ENCODE measurements at regions of chr17 and their contacts with region 1.

Region 1: DNA sequence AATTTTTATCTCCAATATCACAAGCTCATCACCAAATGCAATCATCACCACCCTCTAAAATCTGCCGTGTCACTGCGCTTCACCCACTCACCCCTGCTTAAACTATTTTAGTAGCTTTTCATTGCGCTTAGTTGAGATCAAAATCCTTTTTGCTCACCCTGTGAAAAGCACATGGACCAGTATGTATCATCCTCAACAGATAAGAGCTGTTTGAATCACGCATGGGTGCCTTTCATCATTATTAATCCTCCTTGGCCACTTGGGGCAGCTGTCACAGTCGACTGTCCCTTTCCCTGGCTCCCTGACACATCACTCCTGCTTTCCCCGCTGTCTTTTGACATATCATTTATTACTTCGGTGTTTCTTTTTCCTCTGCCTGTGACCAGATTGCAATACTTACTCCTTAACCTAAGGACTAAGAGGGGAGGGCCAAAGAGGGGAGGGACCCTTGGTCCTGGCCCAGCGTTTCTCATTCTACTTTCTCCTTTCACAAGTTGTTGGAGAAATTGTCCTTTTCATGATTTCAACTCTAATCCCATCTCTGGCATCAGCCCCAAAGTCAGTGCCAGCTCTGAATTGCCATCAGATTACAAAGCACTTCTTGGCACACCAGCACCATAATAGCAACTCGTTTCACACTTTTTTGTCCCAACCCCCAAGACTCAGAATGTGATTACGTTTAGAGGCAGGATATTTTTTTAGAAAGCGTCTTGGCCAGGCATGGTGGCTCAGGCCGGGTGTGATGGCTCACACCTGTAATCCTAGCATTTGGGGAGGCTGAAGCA is 8.6 kb upstream of the KDM6B start:
- DNase-seq: no peak
- ATAC-seq: peak; percentile 53 to 57

Region 2: DNA sequence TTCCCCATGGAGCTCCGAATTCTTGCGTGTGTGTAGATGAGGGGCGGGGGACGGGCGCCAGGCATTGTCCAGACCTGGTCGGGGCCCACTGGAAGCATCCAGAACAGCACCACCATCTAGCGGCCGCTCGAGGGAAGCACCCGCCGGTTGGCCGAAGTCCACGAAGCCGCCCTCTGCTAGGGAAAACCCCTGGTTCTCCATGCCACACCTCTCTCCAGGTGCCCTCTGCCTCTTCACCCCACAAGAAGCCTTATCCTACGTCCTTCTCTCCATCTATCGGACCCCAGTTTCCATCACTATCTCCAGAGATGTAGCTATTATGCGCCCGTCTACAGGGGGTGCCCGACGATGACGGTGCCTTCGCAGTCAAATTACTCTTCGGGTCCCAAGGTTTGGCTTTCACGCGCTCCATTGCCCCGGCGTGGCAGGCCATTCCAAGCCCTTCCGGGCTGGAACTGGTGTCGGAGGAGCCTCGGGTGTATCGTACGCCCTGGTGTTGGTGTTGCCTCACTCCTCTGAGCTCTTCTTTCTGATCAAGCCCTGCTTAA is 264.3 kb before region 1 on chr17:
- intact Hi-C with region 1: no loop called
- DNase-seq: peak; percentile 93
- ATAC-seq: peak; percentile 76 to 83

Region 3: DNA sequence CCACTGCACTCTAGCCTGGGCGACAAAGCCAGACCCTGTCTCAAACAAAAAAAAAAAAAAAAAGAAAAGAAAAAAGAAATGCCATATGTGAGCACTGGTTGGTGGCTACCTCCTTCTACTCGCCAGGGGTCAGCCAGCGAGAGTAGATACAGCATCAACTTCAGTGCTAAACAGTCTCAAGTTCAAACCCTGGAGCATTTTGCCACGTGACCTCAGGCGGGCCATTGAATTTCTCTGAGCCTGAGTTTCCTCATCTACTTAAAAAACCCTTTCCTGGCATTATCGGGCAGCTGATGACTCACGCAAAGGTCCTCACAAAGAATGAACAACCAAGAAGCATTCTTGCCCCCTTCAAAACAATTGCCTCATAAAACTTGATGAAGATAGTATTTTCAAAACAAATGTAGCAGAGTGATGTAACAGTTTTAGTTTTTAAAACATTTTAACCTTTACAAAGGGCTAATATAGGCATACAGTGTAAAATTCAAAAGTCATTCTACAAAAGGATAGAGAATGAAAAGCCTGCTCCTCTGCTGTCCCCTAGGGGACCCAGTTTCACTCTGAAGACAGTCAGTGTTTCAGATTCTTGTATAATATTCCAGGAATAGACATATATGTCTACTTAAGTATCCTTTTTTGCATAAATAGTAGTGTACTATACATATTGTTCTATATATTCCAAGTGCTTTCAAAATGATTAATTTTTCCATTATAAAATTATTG is 79.5 kb before region 1 on chr17:
- intact Hi-C with region 1: loop called in 1 of 2 experiments (anchors 5 kb)
- DNase-seq: peak; percentile 41
- ATAC-seq: peak in 1 of 2 donors; percentile 13

Region 4: DNA sequence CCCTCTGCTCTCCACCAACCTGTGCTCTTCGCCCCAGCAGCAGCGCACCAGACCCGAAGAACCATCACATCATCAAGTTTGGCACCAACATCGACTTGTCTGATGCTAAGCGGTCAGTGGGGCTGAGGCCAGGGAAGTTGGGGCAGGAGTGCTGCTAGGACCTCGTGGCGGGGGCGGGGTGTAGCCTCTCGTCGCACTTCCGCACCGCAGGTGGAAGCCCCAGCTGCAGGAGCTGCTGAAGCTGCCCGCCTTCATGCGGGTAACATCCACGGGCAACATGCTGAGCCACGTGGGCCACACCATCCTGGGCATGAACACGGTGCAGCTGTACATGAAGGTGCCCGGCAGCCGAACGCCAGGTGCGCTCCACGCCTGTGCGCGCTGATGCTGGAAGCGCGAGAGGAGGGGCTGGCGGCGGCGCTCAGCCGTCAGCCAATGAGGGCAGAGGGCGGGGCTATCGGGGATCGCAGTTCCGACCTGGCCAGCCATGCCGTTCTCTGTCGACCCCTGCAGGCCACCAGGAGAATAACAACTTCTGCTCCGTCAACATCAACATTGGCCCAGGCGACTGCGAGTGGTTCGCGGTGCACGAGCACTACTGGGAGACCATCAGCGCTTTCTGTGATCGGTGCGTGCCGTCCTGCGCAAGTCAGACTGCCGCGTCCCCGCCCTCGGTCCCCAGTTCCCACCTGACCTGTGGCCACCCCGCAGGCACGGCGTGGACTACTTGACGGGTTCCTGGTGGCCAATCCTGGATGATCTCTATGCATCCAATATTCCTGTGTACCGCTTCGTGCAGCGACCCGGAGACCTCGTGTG is 26.2 kb after region 1 on chr17:
- intact Hi-C with region 1: loop called (anchors 2 to 5 kb)
- DNase-seq: peak; percentile 93
- ATAC-seq: peak; percentile 71 to 75

Region 5: GRCh38 chr17:7856883-7857723 is 31.7 kb after region 1 on chr17 and contains the start of gene NAA38:
- intact Hi-C with region 1: loop called (anchors 2 to 5 kb)
- DNase-seq: peak; percentile 97
- ATAC-seq: peak; percentile 87 to 89
- total RNA-seq, gene NAA38: 66.9 to 83.1 TPM

Region 6: GRCh38 chr17:7897773-7898172 is 72.4 kb after region 1 on chr17:
- intact Hi-C with region 1: loop called in 1 of 2 experiments (anchors 2 kb)
- DNase-seq: no peak
- ATAC-seq: peak; percentile 77 to 86

Region 7: GRCh38 chr17:8001976-8002720 is 176.8 kb after region 1 on chr17 and contains the start of gene GUCY2D:
- intact Hi-C with region 1: no loop called
- DNase-seq: no peak
- ATAC-seq: peak; percentile 17 to 30
- total RNA-seq, gene GUCY2D: 0.10 to 0.38 TPM

Region 8: GRCh38 chr17:8057691-8058114 is 232.3 kb after region 1 on chr17:
- intact Hi-C with region 1: loop called in 1 of 2 experiments (anchors 10 kb)
- DNase-seq: no peak
- ATAC-seq: peak; percentile 81 to 85

Measured in left cardiac atrium (tissue), 4 donors.